Activated CD8-positive, alpha-beta T cell treated with anti-CD3 and anti-CD28 coated beads for 36 hours (primary cell): ENCODE measurements at regions of chr3 and their contacts with region 1.

Region 1: DNA sequence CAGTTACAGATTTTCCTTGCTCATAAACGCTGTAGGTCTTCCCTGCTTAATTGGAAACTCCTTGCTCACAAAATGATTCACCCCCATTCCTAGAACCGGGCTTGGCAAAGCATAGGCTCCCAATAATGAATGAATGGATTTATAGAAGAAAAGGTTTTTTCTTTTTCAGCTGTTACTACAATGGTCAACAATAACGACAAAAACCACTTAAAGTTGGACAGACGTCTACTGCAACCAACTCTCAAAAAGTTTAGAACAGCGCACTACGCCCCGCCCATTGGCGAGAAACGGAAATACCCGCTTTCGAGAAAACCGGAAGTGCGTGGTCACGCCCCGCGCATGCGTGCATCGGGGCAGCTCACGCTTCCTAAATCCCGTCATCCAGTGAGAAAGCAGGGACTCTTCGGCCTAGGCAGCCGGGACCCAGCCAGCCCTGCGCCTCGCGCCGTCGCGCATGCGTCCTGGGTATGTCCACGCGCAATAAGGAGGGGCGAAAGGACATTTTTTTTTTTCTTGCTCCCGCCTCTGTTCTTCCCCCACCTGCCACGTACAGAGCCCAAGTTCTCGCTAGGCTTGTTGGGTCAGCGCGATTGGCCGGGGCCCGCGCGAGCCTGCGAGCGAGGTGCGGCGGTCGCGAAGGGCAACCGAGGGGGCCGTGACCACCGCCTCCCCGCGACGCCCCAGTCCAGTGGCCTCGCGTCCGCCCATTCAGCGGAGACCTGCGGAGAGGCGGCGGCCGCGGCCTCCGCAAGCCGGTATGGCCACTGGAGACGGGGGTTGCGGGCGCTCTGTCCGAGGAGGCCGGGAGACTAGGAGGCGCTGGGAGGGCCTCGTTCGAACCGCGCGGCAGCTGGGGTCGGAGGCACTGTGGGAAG is at the start of gene TFG:
- DNase-seq: peak; percentile 100
- ATAC-seq: peak; percentile 92
- H3K4me3 Mint-ChIP-seq: peak within 1 kb of the TSS; percentile 77
- H3K27ac Mint-ChIP-seq: peak within 1 kb of the TSS; percentile 95
- H3K4me1 Mint-ChIP-seq: peaks cover 38% of the 10 kb centered on the region
- H3K27me3 Mint-ChIP-seq: no peaks in the 10 kb centered on the region
- CTCF ChIP-seq: no peak
- total RNA-seq, gene TFG: 59.2 TPM

Region 2: GRCh38 chr3:100570811-100571210 is 138.4 kb before region 1 on chr3:
- CTCF ChIA-PET with region 1: no interaction called
- POLR2A ChIA-PET with region 1: no interaction called
- intact Hi-C with region 1: no loop called
- DNase-seq: no peak
- ATAC-seq: no peak
- H3K4me3 Mint-ChIP-seq: no peak overlapping the region
- H3K27ac Mint-ChIP-seq: no peak overlapping the region
- H3K4me1 Mint-ChIP-seq: no peaks in the 10 kb centered on the region
- H3K27me3 Mint-ChIP-seq: peaks cover 2% of the 10 kb centered on the region
- CTCF ChIP-seq: no peak

Region 3: GRCh38 chr3:100603469-100603868 is 105.7 kb before region 1 on chr3:
- CTCF ChIA-PET with region 1: interaction called, 11 read pairs
- POLR2A ChIA-PET with region 1: no interaction called
- intact Hi-C with region 1: no loop called
- DNase-seq: peak; percentile 10
- ATAC-seq: peak; percentile 71
- H3K4me3 Mint-ChIP-seq: peak overlapping the region; percentile 54
- H3K27ac Mint-ChIP-seq: peak overlapping the region; percentile 73
- H3K4me1 Mint-ChIP-seq: peaks cover 15% of the 10 kb centered on the region
- H3K27me3 Mint-ChIP-seq: peaks cover 2% of the 10 kb centered on the region
- CTCF ChIP-seq: peak; percentile 24

Region 4: DNA sequence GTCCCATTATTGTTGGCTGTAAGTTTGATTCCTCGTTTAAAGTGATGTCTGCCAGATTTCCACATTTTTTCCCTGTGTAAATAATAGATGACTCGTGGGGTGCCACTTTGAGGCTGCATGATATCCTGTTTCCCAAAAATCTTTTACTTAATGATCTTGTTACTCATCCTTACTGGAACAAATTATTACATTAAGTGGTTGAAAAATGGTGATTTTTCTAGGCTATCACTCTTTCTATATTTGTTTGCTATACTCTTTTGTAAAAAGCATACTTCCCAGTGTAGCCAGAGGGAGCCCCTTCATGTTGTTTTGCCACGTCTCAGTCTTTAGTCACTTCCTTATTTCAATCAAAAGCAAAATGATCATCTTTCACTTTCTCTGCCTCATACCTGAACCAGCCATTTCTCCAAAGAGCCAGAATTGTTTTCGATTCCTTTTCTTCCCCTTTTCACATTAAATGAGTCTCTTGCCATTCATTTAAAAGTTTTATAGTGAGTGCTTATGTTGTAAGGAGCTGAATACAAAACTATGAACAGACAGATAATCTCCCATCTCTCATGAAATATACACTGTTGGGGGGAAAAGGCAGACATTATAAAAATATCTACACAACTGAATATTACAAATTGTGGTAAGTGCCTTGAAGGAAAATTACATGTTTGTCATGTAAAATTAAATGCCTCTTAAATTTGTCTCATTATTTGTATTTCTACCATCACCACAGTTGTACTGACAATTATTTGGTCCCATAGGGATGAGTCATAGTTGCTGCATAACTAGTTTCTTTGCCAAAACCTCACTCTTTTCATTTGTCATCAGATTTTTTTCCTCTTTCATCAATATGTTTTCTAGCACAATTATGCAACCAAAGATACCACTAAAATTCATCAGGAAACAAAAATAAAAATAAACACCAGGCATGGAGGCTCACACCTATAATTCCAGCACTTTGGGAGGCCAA is 58.3 kb before region 1 on chr3:
- CTCF ChIA-PET with region 1: interaction called, 19 read pairs
- POLR2A ChIA-PET with region 1: interaction called, 5 read pairs
- intact Hi-C with region 1: no loop called
- DNase-seq: peak; percentile 60
- ATAC-seq: peak; percentile 99
- H3K4me3 Mint-ChIP-seq: peak overlapping the region; percentile 39
- H3K27ac Mint-ChIP-seq: peak overlapping the region; percentile 89
- H3K4me1 Mint-ChIP-seq: peaks cover 20% of the 10 kb centered on the region
- H3K27me3 Mint-ChIP-seq: no peaks in the 10 kb centered on the region
- CTCF ChIP-seq: peak; percentile 69

Region 5: DNA sequence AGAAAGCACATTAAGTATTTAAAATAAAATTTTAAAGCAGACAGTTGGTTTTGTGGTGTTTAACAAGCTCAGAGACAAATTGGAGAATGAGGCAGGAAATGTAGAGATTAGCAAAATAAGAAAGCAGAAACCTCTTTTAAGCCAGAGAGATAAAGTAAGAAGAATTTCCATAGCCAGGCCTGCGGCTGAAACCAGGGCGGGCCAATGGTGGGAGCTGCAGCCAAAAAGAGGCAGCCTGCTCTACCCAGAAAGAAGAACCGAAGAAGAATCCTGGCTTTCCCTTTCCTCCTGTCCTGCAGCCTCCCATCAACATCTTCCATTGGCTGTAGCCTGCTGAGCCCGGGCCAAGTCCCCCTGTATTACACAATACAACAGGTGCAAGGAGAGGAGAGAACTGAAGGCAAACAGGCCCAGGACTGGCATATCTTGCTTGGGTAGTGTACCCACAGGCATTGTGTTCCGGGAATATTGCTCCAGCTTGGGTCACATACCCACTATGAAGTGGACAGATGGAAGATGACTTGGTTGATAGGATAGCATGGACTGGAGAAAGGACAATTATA is 11.4 kb before region 1 on chr3:
- CTCF ChIA-PET with region 1: interaction called, 17 read pairs
- POLR2A ChIA-PET with region 1: interaction called, 12 read pairs
- intact Hi-C with region 1: no loop called
- DNase-seq: no peak
- ATAC-seq: no peak
- H3K4me3 Mint-ChIP-seq: no peak overlapping the region
- H3K27ac Mint-ChIP-seq: no peak overlapping the region
- H3K4me1 Mint-ChIP-seq: peaks cover 2% of the 10 kb centered on the region
- H3K27me3 Mint-ChIP-seq: peaks cover 2% of the 10 kb centered on the region
- CTCF ChIP-seq: no peak